ENCODE measurements at regions of chr12 and their contacts with region 1.

Region 1: DNA sequence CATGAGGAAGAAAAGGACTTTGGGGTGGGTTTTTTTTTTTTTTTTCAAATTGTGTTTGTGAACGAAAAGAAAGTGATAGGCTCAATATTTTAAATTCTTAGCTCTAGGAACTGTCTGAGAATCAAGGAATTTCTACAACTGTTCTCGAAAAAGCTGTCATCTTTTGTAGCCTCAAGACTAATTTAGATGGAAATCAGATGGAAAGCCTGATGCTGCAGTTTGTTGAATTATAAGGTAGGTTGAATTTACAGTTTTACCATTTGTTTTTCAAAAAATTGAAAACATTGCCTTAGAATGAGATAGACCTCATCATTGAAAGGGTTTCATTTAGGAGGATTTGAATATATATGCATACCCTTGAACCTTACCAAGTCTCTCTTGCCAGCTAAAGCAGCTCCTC is 109.3 kb upstream of the TRHDE start:
- DNase-seq: no peak
- H3K4me3 Mint-ChIP-seq: no peak overlapping the region
- H3K27ac Mint-ChIP-seq: no peak overlapping the region
- H3K4me1 Mint-ChIP-seq: no peaks in the 10 kb centered on the region
- H3K27me3 Mint-ChIP-seq: no peaks in the 10 kb centered on the region
- CTCF ChIP-seq: no peak

Region 2: GRCh38 chr12:71981149-71981548 is 181.7 kb before region 1 on chr12:
- CTCF ChIA-PET with region 1: no interaction called
- intact Hi-C with region 1: no loop called
- DNase-seq: no peak
- H3K4me3 Mint-ChIP-seq: no peak overlapping the region
- H3K27ac Mint-ChIP-seq: no peak overlapping the region
- H3K4me1 Mint-ChIP-seq: no peaks in the 10 kb centered on the region
- H3K27me3 Mint-ChIP-seq: peaks cover 13% of the 10 kb centered on the region
- CTCF ChIP-seq: no peak

Region 3: GRCh38 chr12:72178871-72179270 is 16.0 kb after region 1 on chr12:
- CTCF ChIA-PET with region 1: interaction called, 12 read pairs
- intact Hi-C with region 1: no loop called
- DNase-seq: no peak
- H3K4me3 Mint-ChIP-seq: no peak overlapping the region
- H3K27ac Mint-ChIP-seq: no peak overlapping the region
- H3K4me1 Mint-ChIP-seq: no peaks in the 10 kb centered on the region
- H3K27me3 Mint-ChIP-seq: no peaks in the 10 kb centered on the region
- CTCF ChIP-seq: no peak

Measured in Calu3 (cell line).